ENCODE measurements at regions of chr5 and their contacts with region 1.

Region 1: DNA sequence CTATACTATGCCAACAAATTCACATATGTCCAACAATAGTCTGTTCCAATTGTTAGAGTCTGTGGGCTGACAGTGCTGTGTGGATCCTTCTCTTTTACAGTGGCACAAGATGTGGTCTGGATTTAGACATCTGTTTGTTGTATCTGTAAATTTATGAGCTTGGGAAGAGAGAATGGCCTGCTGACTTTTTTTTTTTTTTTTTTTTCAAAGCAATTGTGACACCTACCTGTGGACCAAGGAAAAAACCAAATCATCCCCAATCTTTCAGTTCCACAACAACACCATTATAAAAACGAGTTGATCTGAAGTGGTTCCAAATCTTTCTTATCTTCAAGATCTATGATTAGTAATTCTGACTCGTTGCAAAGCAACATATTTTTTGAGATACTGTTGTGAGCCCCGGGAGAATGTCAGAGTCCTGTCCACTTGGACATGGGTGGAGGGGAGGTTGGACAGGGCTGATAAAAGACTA is 4.9 kb downstream of the IRX2 start:
- DNase-seq: peak; percentile 71
- H3K4me3 Mint-ChIP-seq: peak overlapping the region; percentile 82
- H3K27ac Mint-ChIP-seq: peak overlapping the region; percentile 94
- H3K4me1 Mint-ChIP-seq: peaks cover 32% of the 10 kb centered on the region
- H3K27me3 Mint-ChIP-seq: no peaks in the 10 kb centered on the region
- CTCF ChIP-seq: peak; percentile 22

Region 2: DNA sequence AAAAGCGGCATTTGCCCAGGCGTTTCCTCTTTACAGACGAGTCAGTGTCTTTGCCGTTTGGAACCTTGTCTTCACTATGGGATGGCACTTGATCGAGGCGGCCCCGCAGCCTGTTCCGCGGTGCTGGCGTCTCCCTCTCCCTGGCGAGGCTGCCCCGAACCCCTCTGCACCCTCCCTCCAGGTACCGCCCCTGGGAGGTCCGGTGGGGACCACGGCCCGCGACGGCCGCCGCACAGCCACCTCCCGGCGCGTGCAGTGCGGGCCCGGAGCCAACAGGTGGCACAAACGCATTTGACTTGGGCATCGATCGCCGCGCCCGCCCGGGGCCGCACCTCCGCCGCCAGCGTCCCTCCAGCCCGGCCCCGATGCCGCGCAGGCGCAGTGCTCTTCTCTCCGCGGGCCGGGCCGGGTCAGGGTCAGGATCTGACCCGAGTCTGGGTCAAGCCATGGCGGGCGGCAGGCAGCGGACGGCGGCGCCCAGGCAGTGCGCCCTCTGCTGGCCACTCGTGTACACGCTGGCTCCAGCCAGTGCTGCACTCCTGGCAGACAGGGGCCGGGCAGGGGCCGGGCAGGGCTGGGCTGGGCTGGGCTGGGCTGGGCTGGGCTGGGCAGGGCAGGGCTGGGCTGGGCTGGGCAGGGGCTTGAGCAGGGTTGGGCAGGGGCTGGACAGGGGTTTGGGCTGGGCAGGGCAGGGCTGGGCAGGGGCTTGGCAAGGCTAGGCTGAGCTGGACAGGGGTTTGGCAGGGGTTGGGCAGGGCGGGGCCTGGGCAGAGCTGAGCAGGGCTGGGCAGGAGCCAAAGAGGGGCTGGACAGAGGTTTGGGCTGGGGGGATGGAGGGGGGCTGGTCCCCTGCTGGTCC is 708.0 kb before region 1 on chr5:
- CTCF ChIA-PET with region 1: no interaction called
- POLR2A ChIA-PET with region 1: no interaction called
- intact Hi-C with region 1: loop called (anchors 5 kb)
- DNase-seq: peak; percentile 68
- H3K4me3 Mint-ChIP-seq: peak overlapping the region; percentile 71
- H3K27ac Mint-ChIP-seq: no peak overlapping the region
- H3K4me1 Mint-ChIP-seq: no peaks in the 10 kb centered on the region
- H3K27me3 Mint-ChIP-seq: peaks cover 27% of the 10 kb centered on the region
- CTCF ChIP-seq: peak; percentile 83

Region 3: DNA sequence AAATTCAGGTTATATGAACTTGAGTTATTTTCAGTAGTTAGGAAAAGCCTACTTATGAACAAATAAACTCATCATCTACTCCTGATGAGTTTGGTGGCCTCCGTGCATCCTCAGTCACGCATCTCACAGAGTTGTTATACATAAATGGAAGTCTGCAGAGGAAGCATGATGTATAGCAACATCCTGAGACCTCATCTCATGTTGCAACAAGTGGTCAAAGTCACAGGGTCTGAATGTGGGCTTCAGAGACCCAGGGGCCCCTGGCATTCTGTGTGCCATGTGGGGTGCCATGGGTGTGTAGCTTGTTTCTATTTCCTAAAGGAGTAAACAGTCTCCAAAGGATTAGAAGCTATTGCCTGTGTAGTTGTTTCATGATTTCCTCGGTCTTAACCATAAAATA is 211.6 kb before region 1 on chr5:
- CTCF ChIA-PET with region 1: no interaction called
- POLR2A ChIA-PET with region 1: no interaction called
- intact Hi-C with region 1: loop called (anchors 1 kb)
- DNase-seq: no peak
- H3K4me3 Mint-ChIP-seq: no peak overlapping the region
- H3K27ac Mint-ChIP-seq: no peak overlapping the region
- H3K4me1 Mint-ChIP-seq: no peaks in the 10 kb centered on the region
- H3K27me3 Mint-ChIP-seq: peaks cover 12% of the 10 kb centered on the region
- CTCF ChIP-seq: no peak

Region 4: GRCh38 chr5:2685651-2686272 is 60.8 kb before region 1 on chr5:
- CTCF ChIA-PET with region 1: interaction called, 3 read pairs
- POLR2A ChIA-PET with region 1: interaction called, 27 read pairs
- intact Hi-C with region 1: loop called (anchors 5 kb)
- DNase-seq: peak; percentile 96
- H3K4me3 Mint-ChIP-seq: peak overlapping the region; percentile 57
- H3K27ac Mint-ChIP-seq: peak overlapping the region; percentile 92
- H3K4me1 Mint-ChIP-seq: peaks cover 51% of the 10 kb centered on the region
- H3K27me3 Mint-ChIP-seq: no peaks in the 10 kb centered on the region
- CTCF ChIP-seq: no peak

Region 5: DNA sequence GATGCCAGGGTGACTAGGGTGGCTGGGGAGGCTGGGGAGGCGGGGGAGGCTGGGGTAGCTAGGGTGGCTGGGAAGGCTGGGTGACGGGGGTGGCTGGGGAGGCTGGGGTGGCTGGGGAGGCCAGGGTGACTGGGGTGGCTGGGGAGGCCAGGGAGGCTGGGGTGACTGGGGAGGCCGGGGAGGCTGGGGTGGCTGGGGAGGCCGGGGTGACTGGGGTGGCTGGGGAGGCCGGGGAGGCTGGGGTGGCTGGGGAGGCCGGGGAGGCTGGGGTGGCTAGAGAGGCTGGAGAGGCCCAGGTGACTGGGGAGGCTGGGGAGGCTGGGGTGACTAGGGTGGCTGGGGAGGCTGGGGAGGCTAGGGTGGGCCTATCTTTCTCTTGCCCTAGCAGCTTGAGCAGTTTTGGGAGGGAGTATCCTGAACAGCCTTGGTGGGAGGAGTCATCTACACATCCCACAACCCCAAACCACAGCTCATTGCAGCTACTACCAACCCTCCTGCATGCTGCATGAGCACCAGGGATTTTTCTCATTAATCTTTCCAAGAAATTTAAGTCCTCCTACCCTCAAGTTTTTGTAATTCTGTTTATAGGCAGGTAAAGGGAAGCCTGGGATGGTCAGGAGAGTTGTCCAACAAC is 645.8 kb after region 1 on chr5:
- CTCF ChIA-PET with region 1: no interaction called
- POLR2A ChIA-PET with region 1: no interaction called
- intact Hi-C with region 1: no loop called
- DNase-seq: no peak
- H3K4me3 Mint-ChIP-seq: no peak overlapping the region
- H3K27ac Mint-ChIP-seq: no peak overlapping the region
- H3K4me1 Mint-ChIP-seq: no peaks in the 10 kb centered on the region
- H3K27me3 Mint-ChIP-seq: no peaks in the 10 kb centered on the region
- CTCF ChIP-seq: no peak

Region 6: GRCh38 chr5:3595006-3595961 is 848.7 kb after region 1 on chr5 and contains the start of gene IRX1:
- CTCF ChIA-PET with region 1: no interaction called
- POLR2A ChIA-PET with region 1: interaction called, 43 read pairs
- intact Hi-C with region 1: loop called (anchors 2 kb)
- DNase-seq: peak; percentile 80
- H3K4me3 Mint-ChIP-seq: peak within 1 kb of the TSS; percentile 79
- H3K27ac Mint-ChIP-seq: peak within 1 kb of the TSS; percentile 93
- H3K4me1 Mint-ChIP-seq: peaks cover 8% of the 10 kb centered on the region
- H3K27me3 Mint-ChIP-seq: no peaks in the 10 kb centered on the region
- CTCF ChIP-seq: no peak
- total RNA-seq, gene IRX1: 13.8 and 15.5 TPM in 2 replicates